HepG2 (cell line): ENCODE measurements at regions of chr20 and their contacts with region 1.

Region 1: GRCh38 chr20:8250539-8251200 is 118.6 kb downstream of the PLCB1 start:
- DNase-seq: peak; percentile 100
- ATAC-seq: peak; percentile 98
- H3K4me3 ChIP-seq: peak overlapping the region in 2 of 3 experiments; percentile 12 to 19; a peak in 1 of 6 replicates
- H3K27ac ChIP-seq: peak overlapping the region; percentile 58
- H3K4me1 ChIP-seq: peaks cover 73% of the 10 kb centered on the region
- H3K27me3 ChIP-seq: no peaks in the 10 kb centered on the region
- CTCF ChIP-seq: no peak
- EP300 ChIP-seq: peak; percentile 87 to 99; a peak in 3 of 4 replicates
- POLR2A ChIP-seq: no peak
- RAD21 ChIP-seq: no peak

Region 2: DNA sequence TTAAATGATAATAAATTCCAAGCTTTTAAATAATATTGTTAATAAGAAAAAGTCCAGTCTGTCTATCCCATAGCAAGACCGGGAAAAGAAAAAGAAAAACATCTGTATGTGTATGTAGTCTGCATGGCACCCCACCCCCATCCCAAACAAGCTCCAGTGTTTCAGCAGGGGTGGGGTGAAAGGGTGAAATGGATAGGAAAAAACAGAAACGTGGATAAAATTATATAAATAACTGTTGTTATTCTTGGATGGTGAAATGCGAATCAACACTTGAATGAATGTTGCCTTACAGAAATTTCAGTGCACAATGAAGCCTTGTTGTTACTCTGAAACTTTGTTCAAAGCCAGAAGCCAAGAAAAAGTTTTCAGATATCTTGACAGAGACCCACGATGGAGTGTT is 341.8 kb before region 1 on chr20:
- CTCF ChIA-PET with region 1: no interaction called
- POLR2A ChIA-PET with region 1: no interaction called
- in situ Hi-C with region 1: no loop called
- intact Hi-C with region 1: no loop called
- DNase-seq: no peak
- ATAC-seq: no peak
- H3K4me3 ChIP-seq: no peak overlapping the region
- H3K27ac ChIP-seq: no peak overlapping the region
- H3K4me1 ChIP-seq: no peaks in the 10 kb centered on the region
- H3K27me3 ChIP-seq: no peaks in the 10 kb centered on the region
- CTCF ChIP-seq: no peak
- EP300 ChIP-seq: no peak
- POLR2A ChIP-seq: no peak
- RAD21 ChIP-seq: no peak

Region 3: DNA sequence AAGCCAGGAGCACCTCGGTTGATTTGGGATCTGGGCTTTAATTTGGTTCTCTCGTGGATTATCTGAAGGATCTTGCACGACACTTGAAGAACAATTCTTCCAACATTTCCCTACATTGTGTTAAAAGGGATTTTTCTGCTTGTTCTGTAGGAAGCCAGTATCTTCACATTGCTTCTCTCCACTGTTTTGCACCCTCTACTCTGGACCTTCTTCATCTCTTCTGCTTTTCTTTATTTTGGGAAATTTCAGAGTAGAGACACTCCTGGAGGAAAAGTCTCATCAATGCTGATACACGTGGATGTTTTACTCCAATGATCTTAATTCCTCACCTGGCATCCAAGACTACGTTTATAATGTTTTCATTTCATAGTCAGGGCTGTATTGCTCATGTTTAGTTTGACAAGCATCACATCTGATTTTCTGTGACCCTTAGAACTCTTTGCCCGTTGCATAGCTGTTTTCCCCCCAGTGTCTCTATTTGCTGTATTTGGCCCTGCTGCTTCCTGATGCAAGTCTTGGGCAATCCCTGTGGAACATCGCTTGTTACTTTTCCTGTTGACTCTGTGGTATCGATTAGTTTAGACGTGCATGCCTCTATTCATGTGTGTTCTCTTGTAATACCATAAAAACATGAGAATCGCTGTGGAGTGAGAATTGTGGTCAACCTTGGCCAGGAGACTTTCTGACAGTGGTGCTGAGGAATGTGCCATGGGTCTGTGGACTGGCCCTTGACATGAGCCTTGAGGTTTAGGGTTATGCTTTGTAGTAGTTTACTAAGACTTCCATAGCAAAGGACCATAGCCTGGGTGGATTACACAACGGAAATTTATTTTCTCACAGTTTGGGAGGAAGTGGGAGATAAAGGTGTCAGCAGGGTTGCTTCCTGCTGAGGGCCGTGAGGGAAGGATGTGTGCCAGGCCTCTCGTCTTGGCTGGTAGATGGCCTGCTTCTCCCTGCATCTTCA is 106.1 kb before region 1 on chr20:
- CTCF ChIA-PET with region 1: no interaction called
- POLR2A ChIA-PET with region 1: interaction called, 12 read pairs
- in situ Hi-C with region 1: loop called (anchors 10 kb)
- intact Hi-C with region 1: loop called (anchors 1 kb)
- DNase-seq: peak; percentile 100
- ATAC-seq: peak; percentile 97
- H3K4me3 ChIP-seq: peak overlapping the region in 1 of 3 experiments; percentile 13; a peak in 1 of 6 replicates
- H3K27ac ChIP-seq: peak overlapping the region; percentile 70
- H3K4me1 ChIP-seq: peaks cover 48% of the 10 kb centered on the region
- H3K27me3 ChIP-seq: no peaks in the 10 kb centered on the region
- CTCF ChIP-seq: peak; percentile 35; the same call in 1 of the 2 replicates
- EP300 ChIP-seq: peak; percentile 98 to 99
- POLR2A ChIP-seq: no peak
- RAD21 ChIP-seq: peak; percentile 46

Region 4: DNA sequence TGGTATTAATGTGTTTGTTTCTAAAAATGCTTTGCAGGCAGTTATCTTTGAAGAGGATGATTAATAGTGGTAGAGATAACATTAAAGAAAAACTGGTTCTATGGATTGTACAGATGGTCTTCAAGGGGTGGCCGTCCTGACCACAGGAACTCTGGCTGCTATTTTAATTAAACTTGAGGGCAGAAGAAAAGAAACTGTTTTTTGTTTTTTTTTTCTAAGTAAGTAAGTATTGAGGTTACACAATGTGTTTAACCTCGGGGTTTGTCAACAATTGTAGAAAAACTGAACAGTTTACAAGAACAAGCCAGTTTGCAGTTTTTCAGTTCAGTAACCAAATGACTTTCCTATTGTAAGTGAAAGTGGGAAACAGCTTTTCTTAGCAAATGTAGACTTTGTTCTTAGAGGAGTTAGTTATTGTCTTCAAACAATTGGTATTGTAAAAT is 41.7 kb before region 1 on chr20:
- CTCF ChIA-PET with region 1: no interaction called
- POLR2A ChIA-PET with region 1: interaction called, 7 read pairs
- in situ Hi-C with region 1: no loop called
- intact Hi-C with region 1: loop called (anchors 1 kb)
- DNase-seq: no peak
- ATAC-seq: no peak
- H3K4me3 ChIP-seq: no peak overlapping the region
- H3K27ac ChIP-seq: no peak overlapping the region
- H3K4me1 ChIP-seq: peaks cover 75% of the 10 kb centered on the region
- H3K27me3 ChIP-seq: no peaks in the 10 kb centered on the region
- CTCF ChIP-seq: no peak
- EP300 ChIP-seq: peak in 1 of 2 experiments; percentile 49; a peak in 1 of 4 replicates
- POLR2A ChIP-seq: no peak
- RAD21 ChIP-seq: no peak

Region 5: GRCh38 chr20:8223091-8223870 is 27.4 kb before region 1 on chr20:
- CTCF ChIA-PET with region 1: no interaction called
- POLR2A ChIA-PET with region 1: no interaction called
- in situ Hi-C with region 1: no loop called
- intact Hi-C with region 1: no loop called
- DNase-seq: peak; percentile 50
- ATAC-seq: no peak
- H3K4me3 ChIP-seq: no peak overlapping the region
- H3K27ac ChIP-seq: no peak overlapping the region
- H3K4me1 ChIP-seq: peaks cover 28% of the 10 kb centered on the region
- H3K27me3 ChIP-seq: no peaks in the 10 kb centered on the region
- CTCF ChIP-seq: no peak
- EP300 ChIP-seq: no peak
- POLR2A ChIP-seq: no peak
- RAD21 ChIP-seq: no peak

Region 6: DNA sequence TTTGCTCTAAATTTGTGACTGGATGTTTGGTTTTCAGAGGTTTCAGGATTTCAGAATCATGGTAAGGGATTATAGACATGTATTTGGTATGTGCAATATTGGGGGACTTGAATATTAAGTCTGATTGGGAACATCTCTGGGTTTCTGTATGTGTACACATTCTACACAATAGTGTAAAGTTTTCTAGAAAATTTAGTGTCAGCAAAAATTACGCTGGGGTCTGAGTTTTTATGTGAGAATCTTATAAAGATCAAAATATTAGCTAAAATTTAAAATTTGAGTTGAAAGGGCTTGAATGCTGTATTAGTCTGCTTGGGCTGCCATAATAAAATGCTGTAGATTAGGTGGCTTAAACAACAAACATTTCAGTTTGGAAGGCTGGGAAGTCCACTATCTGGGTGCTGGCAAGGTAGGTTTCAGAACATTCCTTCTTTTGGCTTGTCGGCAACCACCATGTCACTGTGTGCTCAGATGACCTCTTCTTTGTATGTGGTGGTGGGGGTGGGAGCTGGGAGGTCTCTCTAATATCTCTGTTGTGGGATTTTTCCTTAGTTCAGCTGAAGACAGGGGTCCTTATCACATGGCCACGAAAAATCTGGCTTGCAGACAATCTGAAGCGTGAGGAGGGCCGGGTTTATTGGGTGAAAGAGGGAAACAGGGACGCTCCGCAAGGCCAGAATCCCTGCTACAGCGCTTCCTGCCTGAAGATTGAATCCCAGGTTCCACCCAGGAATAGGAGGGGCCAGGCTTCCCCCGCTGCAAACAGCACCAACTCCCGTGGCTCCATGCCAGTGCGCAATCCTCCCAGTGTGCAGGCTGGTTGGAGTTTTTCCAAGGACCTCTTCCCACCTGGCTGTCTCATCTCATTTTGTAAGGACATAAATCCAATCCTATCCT is 181.1 kb after region 1 on chr20:
- CTCF ChIA-PET with region 1: no interaction called
- POLR2A ChIA-PET with region 1: no interaction called
- in situ Hi-C with region 1: no loop called
- intact Hi-C with region 1: no loop called
- DNase-seq: no peak
- ATAC-seq: no peak
- H3K4me3 ChIP-seq: no peak overlapping the region
- H3K27ac ChIP-seq: no peak overlapping the region
- H3K4me1 ChIP-seq: no peaks in the 10 kb centered on the region
- H3K27me3 ChIP-seq: no peaks in the 10 kb centered on the region
- CTCF ChIP-seq: no peak
- EP300 ChIP-seq: no peak
- POLR2A ChIP-seq: no peak
- RAD21 ChIP-seq: no peak